ENCODE measurements at regions of chr1 and their contacts with region 1.

Region 1: DNA sequence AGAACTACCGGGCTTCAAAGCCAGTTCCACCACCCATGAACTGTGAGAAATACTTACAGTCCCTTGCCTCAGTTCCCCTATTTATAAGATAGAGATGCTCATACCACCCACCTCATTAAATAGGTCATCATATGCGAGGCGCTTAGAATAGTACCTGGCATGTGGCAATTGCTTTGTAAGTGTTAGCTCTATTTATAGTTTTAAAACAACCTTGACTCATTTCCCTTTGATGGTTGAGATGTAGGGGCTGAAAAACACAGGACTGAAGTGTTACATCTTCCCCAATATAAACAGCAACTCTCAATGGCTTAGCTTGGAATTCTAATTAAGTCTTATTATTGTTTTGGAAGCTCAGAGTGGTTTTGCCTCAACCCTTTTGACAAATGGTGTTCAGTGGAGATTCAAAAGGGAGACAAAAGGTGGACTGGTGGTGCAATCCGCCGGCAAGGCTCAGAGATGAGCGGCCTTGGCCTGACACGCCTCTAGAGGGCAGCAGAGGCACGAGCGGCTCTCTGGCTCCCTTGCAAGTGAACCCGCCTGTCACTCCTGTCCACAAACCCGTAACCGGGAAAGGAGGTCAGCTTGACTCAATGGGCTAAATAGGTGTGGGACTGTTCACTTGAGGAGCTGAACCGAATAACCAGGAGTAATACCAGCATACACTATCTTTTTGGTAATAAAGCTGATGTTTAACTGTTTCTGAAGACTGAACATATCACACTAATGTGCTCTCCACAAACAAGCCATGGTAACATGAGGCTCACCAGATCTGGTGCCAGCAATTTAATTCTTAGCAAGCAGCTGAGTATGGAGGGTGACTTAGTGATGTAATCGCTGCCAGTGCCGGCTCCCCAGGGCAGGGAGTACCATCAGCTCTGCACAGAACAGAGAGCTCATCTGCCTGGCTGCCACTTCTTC is 19.5 kb upstream of the SMYD2 start:
- DNase-seq: peak; percentile 63
- ATAC-seq: peak; percentile 93
- H3K4me3 Mint-ChIP-seq: no peak overlapping the region
- H3K27ac Mint-ChIP-seq: no peak overlapping the region
- H3K4me1 Mint-ChIP-seq: no peaks in the 10 kb centered on the region
- H3K27me3 Mint-ChIP-seq: peaks cover 54% of the 10 kb centered on the region
- CTCF ChIP-seq: peak; percentile 96

Region 2: GRCh38 chr1:213122514-213122929 is 1138.9 kb before region 1 on chr1:
- CTCF ChIA-PET with region 1: no interaction called
- POLR2A ChIA-PET with region 1: no interaction called
- intact Hi-C with region 1: loop called (anchors 2 kb)
- DNase-seq: no peak
- ATAC-seq: no peak
- H3K4me3 Mint-ChIP-seq: no peak overlapping the region
- H3K27ac Mint-ChIP-seq: no peak overlapping the region
- H3K4me1 Mint-ChIP-seq: peaks cover 1% of the 10 kb centered on the region
- H3K27me3 Mint-ChIP-seq: no peaks in the 10 kb centered on the region
- CTCF ChIP-seq: peak; percentile 19

Region 3: GRCh38 chr1:213891989-213892902 is 369.2 kb before region 1 on chr1:
- CTCF ChIA-PET with region 1: no interaction called
- POLR2A ChIA-PET with region 1: no interaction called
- intact Hi-C with region 1: no loop called
- DNase-seq: no peak
- ATAC-seq: no peak
- H3K4me3 Mint-ChIP-seq: no peak overlapping the region
- H3K27ac Mint-ChIP-seq: no peak overlapping the region
- H3K4me1 Mint-ChIP-seq: no peaks in the 10 kb centered on the region
- H3K27me3 Mint-ChIP-seq: no peaks in the 10 kb centered on the region
- CTCF ChIP-seq: no peak

Region 4: DNA sequence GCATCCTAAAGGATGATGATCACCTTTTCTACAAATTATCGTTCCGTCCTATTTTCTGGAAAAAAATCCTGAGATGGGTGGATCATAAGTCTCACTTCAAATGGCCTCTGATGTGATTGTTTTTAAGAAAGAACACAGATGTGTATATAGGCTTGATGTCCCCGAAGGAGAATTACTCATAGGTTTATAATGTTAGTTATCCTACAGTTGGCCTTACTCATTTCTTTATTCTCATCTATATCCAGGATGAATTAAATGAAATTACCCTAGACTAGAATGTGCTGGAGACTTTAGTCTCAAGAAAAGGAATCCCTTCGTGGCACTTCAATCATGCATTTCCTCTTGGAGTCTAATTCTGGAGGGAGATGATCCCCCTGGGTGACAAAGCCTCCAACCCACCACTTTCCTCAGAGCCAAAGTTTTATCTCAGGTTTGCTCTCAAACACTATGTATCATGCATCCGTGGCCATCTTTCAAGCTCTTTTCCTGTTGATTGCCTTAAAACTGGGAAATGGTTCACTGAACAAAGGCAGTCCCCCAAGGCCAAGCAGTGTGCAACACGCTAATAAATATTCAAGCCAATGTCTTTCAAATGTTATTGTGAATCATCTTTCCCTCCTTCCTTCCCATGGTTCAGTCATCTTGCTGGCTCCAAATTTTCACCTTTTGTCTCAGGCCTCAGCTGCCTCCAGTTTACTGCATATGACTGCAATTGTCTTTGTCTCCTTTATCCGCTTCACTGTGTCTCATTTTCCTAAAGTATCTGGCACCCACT is 13.0 kb before region 1 on chr1:
- CTCF ChIA-PET with region 1: interaction called, 11 read pairs
- POLR2A ChIA-PET with region 1: no interaction called
- intact Hi-C with region 1: no loop called
- DNase-seq: no peak
- ATAC-seq: no peak
- H3K4me3 Mint-ChIP-seq: no peak overlapping the region
- H3K27ac Mint-ChIP-seq: no peak overlapping the region
- H3K4me1 Mint-ChIP-seq: no peaks in the 10 kb centered on the region
- H3K27me3 Mint-ChIP-seq: peaks cover 30% of the 10 kb centered on the region
- CTCF ChIP-seq: no peak

Region 5: DNA sequence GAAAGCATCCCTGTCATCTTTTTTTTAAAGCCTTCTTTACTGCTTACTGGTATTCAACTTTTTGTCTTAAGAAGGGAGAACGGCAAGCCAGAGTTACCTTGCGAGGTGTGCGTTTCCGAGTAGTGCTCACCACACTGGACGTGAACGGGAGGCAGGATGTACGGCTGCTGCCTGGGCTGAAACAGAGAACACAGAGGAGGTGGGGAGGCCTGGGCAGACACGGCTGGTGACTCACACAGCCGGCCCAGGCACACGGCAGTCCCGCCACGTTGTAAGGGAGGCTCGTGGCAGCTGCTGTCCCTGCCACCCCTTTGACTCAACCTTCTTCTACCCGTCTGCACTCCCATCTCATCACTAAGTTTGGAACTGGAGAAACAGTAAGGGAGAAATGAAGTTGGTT is 125.3 kb after region 1 on chr1:
- CTCF ChIA-PET with region 1: no interaction called
- POLR2A ChIA-PET with region 1: no interaction called
- intact Hi-C with region 1: no loop called
- DNase-seq: no peak
- ATAC-seq: no peak
- H3K4me3 Mint-ChIP-seq: no peak overlapping the region
- H3K27ac Mint-ChIP-seq: no peak overlapping the region
- H3K4me1 Mint-ChIP-seq: no peaks in the 10 kb centered on the region
- H3K27me3 Mint-ChIP-seq: no peaks in the 10 kb centered on the region
- CTCF ChIP-seq: no peak

Region 6: DNA sequence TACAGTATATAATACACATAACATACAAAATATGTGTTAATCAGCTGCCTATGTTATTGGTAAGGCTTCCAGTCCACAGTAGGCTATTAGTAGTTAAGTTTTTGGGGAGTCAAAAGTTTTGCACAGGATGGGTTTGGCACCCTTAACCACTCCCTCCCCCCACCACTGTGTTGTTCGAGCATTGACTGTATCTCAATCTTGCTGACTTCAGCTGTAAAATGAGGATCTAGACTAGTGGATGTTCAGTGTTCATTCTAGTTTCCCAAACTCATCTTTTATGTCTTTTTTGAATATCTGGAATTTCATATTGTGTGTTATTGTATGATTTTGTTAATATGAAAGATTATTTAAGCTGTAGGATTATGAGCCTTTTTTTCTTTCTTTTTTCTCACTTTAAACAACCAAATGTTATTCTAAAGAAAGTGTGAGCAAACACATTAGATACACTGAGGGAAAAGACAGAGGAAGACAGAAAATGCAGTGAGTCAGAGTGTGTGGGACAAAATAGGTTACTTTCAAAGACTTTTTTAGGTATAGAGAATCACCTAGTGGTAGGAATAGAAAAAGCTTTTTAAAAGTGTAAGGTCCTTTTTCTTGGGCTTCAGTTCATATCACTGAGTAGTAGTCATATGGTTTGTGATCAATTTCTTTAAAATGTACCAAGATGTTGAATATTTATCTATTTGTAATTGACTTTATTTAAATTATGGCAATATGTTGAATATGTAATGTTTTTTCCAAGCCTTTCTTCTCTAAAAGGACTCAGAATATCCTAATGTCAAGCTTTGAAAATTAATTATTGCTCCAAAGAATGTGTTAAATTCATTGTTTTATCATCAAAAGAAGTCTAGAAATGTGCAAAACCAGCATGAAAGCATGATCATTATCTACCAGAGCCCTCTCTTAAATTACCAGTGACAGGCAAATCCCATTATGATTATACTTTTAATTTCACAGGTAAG is 323.6 kb after region 1 on chr1:
- CTCF ChIA-PET with region 1: no interaction called
- POLR2A ChIA-PET with region 1: no interaction called
- intact Hi-C with region 1: loop called (anchors 5 kb)
- DNase-seq: no peak
- ATAC-seq: no peak
- H3K4me3 Mint-ChIP-seq: no peak overlapping the region
- H3K27ac Mint-ChIP-seq: no peak overlapping the region
- H3K4me1 Mint-ChIP-seq: no peaks in the 10 kb centered on the region
- H3K27me3 Mint-ChIP-seq: peaks cover 11% of the 10 kb centered on the region
- CTCF ChIP-seq: no peak

Region 7: GRCh38 chr1:215526553-215527151 is 1265.2 kb after region 1 on chr1:
- CTCF ChIA-PET with region 1: interaction called, 6 read pairs
- POLR2A ChIA-PET with region 1: no interaction called
- intact Hi-C with region 1: loop called (anchors 2 kb)
- DNase-seq: no peak
- ATAC-seq: no peak
- H3K4me3 Mint-ChIP-seq: no peak overlapping the region
- H3K27ac Mint-ChIP-seq: no peak overlapping the region
- H3K4me1 Mint-ChIP-seq: no peaks in the 10 kb centered on the region
- H3K27me3 Mint-ChIP-seq: peaks cover 1% of the 10 kb centered on the region
- CTCF ChIP-seq: peak; percentile 49